T-cell (primary cell): ENCODE measurements at regions of chr2 and their contacts with region 1.

Region 1: GRCh38 chr2:85551698-85552678 is 9.3 kb downstream of the GGCX start:
- DNase-seq: peak; percentile 74 to 93 (median 87)
- ATAC-seq: peak; percentile 91 to 97 (median 93)
- H3K4me3 ChIP-seq: no peak overlapping the region
- H3K4me3 Mint-ChIP-seq: no peak overlapping the region
- H3K27ac ChIP-seq: no peak overlapping the region
- H3K27ac Mint-ChIP-seq: peak overlapping the region; percentile 39
- H3K4me1 ChIP-seq: no peaks in the 10 kb centered on the region
- H3K4me1 Mint-ChIP-seq: peaks cover 0 to 4% (median 4%) of the 10 kb centered on the region in 3 donors
- H3K27me3 ChIP-seq: no peaks in the 10 kb centered on the region
- H3K27me3 Mint-ChIP-seq: no peaks in the 10 kb centered on the region

Region 2: GRCh38 chr2:85017411-85018048 is 534.5 kb before region 1 on chr2:
- CTCF ChIA-PET with region 1: no interaction called
- POLR2A ChIA-PET with region 1: interaction called in 1 of 2 experiments, 15 read pairs
- DNase-seq: peak in 1 of 35 experiments; percentile 38
- ATAC-seq: no peak
- H3K4me3 ChIP-seq: no peak overlapping the region
- H3K4me3 Mint-ChIP-seq: no peak overlapping the region
- H3K27ac ChIP-seq: no peak overlapping the region
- H3K27ac Mint-ChIP-seq: peak overlapping the region in 1 of 2 donors; percentile 27
- H3K4me1 ChIP-seq: peaks cover 6 to 14% of the 10 kb centered on the region in 2 experiments
- H3K4me1 Mint-ChIP-seq: peaks cover 69 to 79% (median 71%) of the 10 kb centered on the region in 3 donors
- H3K27me3 ChIP-seq: no peaks in the 10 kb centered on the region
- H3K27me3 Mint-ChIP-seq: no peaks in the 10 kb centered on the region

Region 3: DNA sequence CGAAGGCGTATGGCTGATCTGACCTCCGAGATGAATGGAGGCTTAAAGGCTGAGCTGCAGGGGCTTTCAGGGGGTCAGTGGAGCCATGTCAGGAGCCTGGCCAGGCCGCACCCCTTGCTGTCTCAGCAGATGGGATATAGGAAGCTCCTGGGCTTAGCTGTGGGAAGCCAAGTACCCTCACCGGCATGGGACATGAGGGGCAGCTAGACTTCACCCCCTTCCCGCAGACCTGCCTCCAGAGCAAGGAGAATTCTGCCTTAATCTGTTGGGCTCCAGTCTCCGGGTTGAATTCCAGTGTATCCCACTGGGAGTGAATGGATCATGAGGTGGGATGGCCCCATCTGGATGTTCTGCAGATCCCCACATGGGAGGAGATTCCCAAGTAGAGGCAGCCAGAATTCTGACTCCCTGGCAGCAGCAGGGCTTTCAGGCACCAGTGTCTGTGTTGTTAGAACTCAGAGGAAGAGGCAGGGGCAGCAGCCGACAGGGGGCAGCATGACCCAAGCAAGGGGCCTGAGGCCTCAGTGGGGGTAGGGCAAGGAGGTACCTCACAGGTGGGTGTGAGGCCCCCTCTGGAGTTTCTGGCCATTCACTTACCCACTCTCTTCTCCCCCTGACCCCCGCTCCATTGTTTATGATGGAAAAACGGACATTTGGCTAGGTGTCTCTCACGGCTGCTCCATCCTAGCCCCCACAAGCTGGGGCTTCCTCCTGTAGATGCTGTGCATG is 160.9 kb before region 1 on chr2:
- CTCF ChIA-PET with region 1: interaction called, 11 to 18 read pairs
- POLR2A ChIA-PET with region 1: interaction called in 1 of 2 experiments, 5 read pairs
- DNase-seq: peak; percentile 33 to 80 (median 64)
- ATAC-seq: peak; percentile 65 to 83 (median 72)
- H3K4me3 ChIP-seq: no peak overlapping the region
- H3K4me3 Mint-ChIP-seq: no peak overlapping the region
- H3K27ac ChIP-seq: no peak overlapping the region
- H3K27ac Mint-ChIP-seq: peak overlapping the region in 1 of 2 donors; percentile 44
- H3K4me1 ChIP-seq: peaks cover 2 to 15% of the 10 kb centered on the region in 2 experiments
- H3K4me1 Mint-ChIP-seq: peaks cover 6 to 21% (median 17%) of the 10 kb centered on the region in 3 donors
- H3K27me3 ChIP-seq: no peaks in the 10 kb centered on the region
- H3K27me3 Mint-ChIP-seq: no peaks in the 10 kb centered on the region

Region 4: GRCh38 chr2:85420536-85421259 is 131.3 kb before region 1 on chr2:
- CTCF ChIA-PET with region 1: interaction called, 51 to 65 read pairs
- POLR2A ChIA-PET with region 1: interaction called in 1 of 2 experiments, 5 read pairs
- DNase-seq: peak; percentile 47 to 92 (median 81)
- ATAC-seq: peak; percentile 59 to 68 (median 65)
- H3K4me3 ChIP-seq: no peak overlapping the region
- H3K4me3 Mint-ChIP-seq: peak overlapping the region; percentile 62 to 89 (median 74)
- H3K27ac ChIP-seq: peak overlapping the region; percentile 20
- H3K27ac Mint-ChIP-seq: peak overlapping the region; percentile 84 to 86
- H3K4me1 ChIP-seq: peaks cover 12 to 31% of the 10 kb centered on the region in 2 experiments
- H3K4me1 Mint-ChIP-seq: peaks cover 20 to 27% (median 22%) of the 10 kb centered on the region in 3 donors
- H3K27me3 ChIP-seq: no peaks in the 10 kb centered on the region
- H3K27me3 Mint-ChIP-seq: no peaks in the 10 kb centered on the region

Region 5: DNA sequence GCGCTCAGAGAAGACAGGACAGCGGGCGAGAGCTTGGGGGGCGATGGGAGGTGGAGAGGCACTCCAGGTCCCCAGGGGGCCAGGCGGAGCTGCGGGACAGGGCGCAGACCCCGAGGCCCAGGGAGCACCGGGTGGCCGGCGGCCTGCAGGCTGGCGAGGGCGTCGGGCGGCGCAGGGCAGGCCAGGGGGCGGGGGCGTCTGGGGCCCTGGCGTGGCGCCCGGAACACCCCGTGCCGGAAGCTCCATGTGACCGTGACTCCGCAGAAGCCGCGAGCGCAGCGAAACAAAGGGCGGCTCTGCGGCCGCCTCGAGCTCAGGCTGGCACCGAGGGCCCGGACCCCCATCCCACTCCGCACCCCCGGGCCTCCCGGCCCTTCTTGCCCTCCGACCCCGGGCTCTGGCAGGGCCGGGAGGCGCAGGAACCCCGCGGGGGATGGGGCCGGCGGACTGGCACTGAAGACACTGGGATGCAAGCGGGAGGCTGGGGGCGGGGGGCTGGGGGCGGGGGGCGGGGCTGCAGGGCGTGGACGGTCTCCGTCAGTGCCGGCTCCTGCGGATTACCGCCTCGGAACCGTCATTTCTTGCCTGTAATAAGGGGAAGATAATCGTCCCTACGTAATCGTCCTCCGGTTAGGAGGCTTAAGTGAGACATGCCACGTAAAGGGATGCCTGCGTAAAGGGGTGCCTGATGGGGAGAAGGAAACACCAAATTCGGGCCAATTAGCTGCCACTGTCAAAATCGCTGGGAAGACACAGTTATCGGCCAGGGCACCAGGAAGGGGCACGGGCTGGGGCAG is 114.3 kb before region 1 on chr2:
- CTCF ChIA-PET with region 1: interaction called, 3 to 12 read pairs
- POLR2A ChIA-PET with region 1: no interaction called
- DNase-seq: peak; percentile 46 to 88 (median 68)
- ATAC-seq: peak; percentile 83 to 88 (median 86)
- H3K4me3 ChIP-seq: peak overlapping the region; percentile 49 to 55
- H3K4me3 Mint-ChIP-seq: peak overlapping the region; percentile 79 to 86 (median 83)
- H3K27ac ChIP-seq: peak overlapping the region; percentile 89
- H3K27ac Mint-ChIP-seq: peak overlapping the region; percentile 95 to 97
- H3K4me1 ChIP-seq: peaks cover 5 to 35% of the 10 kb centered on the region in 2 experiments
- H3K4me1 Mint-ChIP-seq: peaks cover 24 to 27% (median 26%) of the 10 kb centered on the region in 3 donors
- H3K27me3 ChIP-seq: peaks cover 0 to 3% of the 10 kb centered on the region in 2 experiments
- H3K27me3 Mint-ChIP-seq: no peaks in the 10 kb centered on the region

Region 6: GRCh38 chr2:85516653-85517406 is 35.2 kb before region 1 on chr2:
- CTCF ChIA-PET with region 1: no interaction called
- POLR2A ChIA-PET with region 1: no interaction called
- DNase-seq: no peak
- ATAC-seq: no peak
- H3K4me3 ChIP-seq: no peak overlapping the region
- H3K4me3 Mint-ChIP-seq: no peak overlapping the region
- H3K27ac ChIP-seq: no peak overlapping the region
- H3K27ac Mint-ChIP-seq: no peak overlapping the region
- H3K4me1 ChIP-seq: no peaks in the 10 kb centered on the region
- H3K4me1 Mint-ChIP-seq: no peaks in the 10 kb centered on the region
- H3K27me3 ChIP-seq: no peaks in the 10 kb centered on the region
- H3K27me3 Mint-ChIP-seq: no peaks in the 10 kb centered on the region

Region 7: GRCh38 chr2:85528355-85528754 is 23.6 kb before region 1 on chr2:
- CTCF ChIA-PET with region 1: no interaction called
- POLR2A ChIA-PET with region 1: no interaction called
- DNase-seq: no peak
- ATAC-seq: no peak
- H3K4me3 ChIP-seq: no peak overlapping the region
- H3K4me3 Mint-ChIP-seq: no peak overlapping the region
- H3K27ac ChIP-seq: no peak overlapping the region
- H3K27ac Mint-ChIP-seq: no peak overlapping the region
- H3K4me1 ChIP-seq: no peaks in the 10 kb centered on the region
- H3K4me1 Mint-ChIP-seq: no peaks in the 10 kb centered on the region
- H3K27me3 ChIP-seq: peaks cover 0 to 3% of the 10 kb centered on the region in 2 experiments
- H3K27me3 Mint-ChIP-seq: peaks cover 7 to 14% of the 10 kb centered on the region in 2 donors

Region 8: GRCh38 chr2:85538486-85539360 is 13.3 kb before region 1 on chr2 and contains the start of gene MAT2A:
- CTCF ChIA-PET with region 1: interaction called, 4 to 63 read pairs
- POLR2A ChIA-PET with region 1: interaction called, 3 to 4 read pairs
- DNase-seq: peak; percentile 50 to 90 (median 73)
- ATAC-seq: peak; percentile 78 to 84 (median 80)
- H3K4me3 ChIP-seq: peak within 1 kb of the TSS; percentile 97 to 100
- H3K4me3 Mint-ChIP-seq: peak within 1 kb of the TSS; percentile 92 to 96 (median 94)
- H3K27ac ChIP-seq: peak within 1 kb of the TSS; percentile 78
- H3K27ac Mint-ChIP-seq: peak within 1 kb of the TSS; percentile 93 to 95
- H3K4me1 ChIP-seq: peaks cover 23 to 31% of the 10 kb centered on the region in 2 experiments
- H3K4me1 Mint-ChIP-seq: peaks cover 45 to 49% (median 45%) of the 10 kb centered on the region in 3 donors
- H3K27me3 ChIP-seq: no peaks in the 10 kb centered on the region
- H3K27me3 Mint-ChIP-seq: no peaks in the 10 kb centered on the region
- total RNA-seq, gene MAT2A: 110 to 184 (median 165) TPM